AG04450 (cell line): ENCODE measurements at regions of chr15 and their contacts with region 1.

Region 1: GRCh38 chr15:74036271-74037170 is 42.0 kb downstream of the PML start:
- DNase-seq: peak; percentile 30
- H3K4me3 ChIP-seq: no peak overlapping the region
- H3K27ac ChIP-seq: no peak overlapping the region
- H3K27me3 ChIP-seq: no peaks in the 10 kb centered on the region
- CTCF ChIP-seq: peak; percentile 72

Region 2: GRCh38 chr15:73982222-73982962 is 54.1 kb before region 1 on chr15:
- CTCF ChIA-PET with region 1: interaction called, 10 read pairs
- POLR2A ChIA-PET with region 1: interaction called, 7 read pairs
- DNase-seq: peak; percentile 58
- H3K4me3 ChIP-seq: 0 out of 2 replicates have a peak overlapping the region, but pooled peaks have one; percentile 4
- H3K27ac ChIP-seq: peak overlapping the region; percentile 96
- H3K27me3 ChIP-seq: no peaks in the 10 kb centered on the region
- CTCF ChIP-seq: no peak

Region 3: DNA sequence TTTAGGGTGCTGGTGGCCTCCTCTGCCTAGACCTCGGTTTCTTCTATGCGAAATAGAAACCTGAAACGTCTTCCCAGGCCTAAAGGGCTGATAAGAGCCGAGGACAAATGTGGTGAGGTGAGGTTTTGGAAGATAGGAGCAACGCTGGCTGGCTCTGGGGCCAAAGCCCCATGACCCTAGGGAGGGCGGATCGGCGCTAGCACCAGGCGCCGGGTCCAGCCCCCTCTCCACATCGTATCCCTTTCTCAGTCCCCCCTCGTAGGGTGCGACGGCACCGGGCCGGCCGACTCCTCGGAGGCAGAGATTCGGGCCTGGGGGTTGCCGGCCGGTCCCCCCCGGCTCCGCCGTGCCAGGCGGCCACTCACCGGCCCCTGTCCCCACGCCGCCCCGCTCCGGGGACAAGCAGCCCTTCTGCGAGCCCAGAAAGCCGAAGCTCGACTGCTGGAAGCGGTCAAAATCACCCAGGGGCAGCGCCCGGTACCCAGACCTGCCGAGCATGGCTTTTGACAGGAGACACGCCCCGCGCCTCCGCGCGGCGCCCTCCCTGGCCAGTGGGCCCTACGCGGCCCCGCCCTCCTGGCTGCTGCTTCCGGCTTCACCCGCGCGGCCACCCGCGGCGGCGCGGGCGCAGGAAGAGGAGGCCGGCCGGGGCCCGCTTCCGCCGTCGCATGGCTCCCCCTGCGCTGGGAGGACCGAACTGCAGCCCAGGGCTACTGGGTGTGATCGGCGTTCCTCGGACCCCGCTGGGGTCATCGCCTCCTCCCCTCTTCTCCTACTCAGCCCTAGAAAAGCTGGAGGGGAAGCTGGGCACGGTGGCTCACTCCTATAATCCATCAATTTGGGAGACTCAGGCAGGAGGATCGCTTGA is 44.6 kb before region 1 on chr15 and contains the start of gene STOML1:
- CTCF ChIA-PET with region 1: interaction called, 19 read pairs
- POLR2A ChIA-PET with region 1: interaction called, 4 read pairs
- DNase-seq: peak; percentile 72
- H3K4me3 ChIP-seq: peak within 1 kb of the TSS; percentile 70
- H3K27ac ChIP-seq: no peak within 1 kb of the TSS
- H3K27me3 ChIP-seq: no peaks in the 10 kb centered on the region
- CTCF ChIP-seq: peak; percentile 78
- polyA plus RNA-seq, gene STOML1: 7.3 and 10.0 TPM in 2 replicates

Region 4: DNA sequence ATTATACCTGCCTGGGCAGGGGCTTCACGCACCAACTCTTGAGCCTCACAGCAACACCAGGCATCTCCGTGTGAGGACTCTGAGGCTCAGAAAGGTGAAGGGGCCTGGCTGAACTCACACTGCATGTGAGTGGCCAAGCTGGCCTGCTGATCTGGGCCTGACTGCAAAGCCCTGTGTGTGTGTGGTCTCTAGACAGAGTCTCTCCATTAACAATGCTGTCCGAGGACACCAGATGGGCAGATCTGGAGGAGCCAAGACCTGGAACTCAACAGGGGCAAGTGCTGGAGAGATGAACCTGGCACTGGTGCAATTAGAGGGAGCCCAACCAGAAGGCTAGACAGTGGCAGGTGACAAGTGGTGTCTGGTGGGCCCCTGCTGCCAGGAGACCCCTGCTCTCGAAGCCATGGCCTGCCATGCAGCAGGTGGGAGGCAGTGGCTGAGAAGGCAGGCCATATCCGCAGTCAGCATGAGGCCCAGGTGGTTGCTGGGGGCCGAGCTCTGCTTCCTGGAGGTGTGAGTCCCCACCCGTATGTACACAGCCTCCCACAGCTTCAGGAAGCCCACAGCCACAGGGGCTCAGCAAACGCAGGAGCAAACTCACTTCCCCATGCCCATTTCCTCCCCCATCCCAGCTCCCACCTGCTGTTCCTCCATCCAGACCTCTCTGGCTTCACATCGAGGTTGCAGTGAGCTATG is 292.0 kb after region 1 on chr15:
- CTCF ChIA-PET with region 1: no interaction called
- POLR2A ChIA-PET with region 1: no interaction called
- DNase-seq: no peak
- H3K4me3 ChIP-seq: no peak overlapping the region
- H3K27ac ChIP-seq: no peak overlapping the region
- H3K27me3 ChIP-seq: peaks cover 40% of the 10 kb centered on the region
- CTCF ChIP-seq: no peak